Ascending aorta (tissue), 2 donors: ENCODE measurements at regions of chr18 and their contacts with region 1.

Region 1: DNA sequence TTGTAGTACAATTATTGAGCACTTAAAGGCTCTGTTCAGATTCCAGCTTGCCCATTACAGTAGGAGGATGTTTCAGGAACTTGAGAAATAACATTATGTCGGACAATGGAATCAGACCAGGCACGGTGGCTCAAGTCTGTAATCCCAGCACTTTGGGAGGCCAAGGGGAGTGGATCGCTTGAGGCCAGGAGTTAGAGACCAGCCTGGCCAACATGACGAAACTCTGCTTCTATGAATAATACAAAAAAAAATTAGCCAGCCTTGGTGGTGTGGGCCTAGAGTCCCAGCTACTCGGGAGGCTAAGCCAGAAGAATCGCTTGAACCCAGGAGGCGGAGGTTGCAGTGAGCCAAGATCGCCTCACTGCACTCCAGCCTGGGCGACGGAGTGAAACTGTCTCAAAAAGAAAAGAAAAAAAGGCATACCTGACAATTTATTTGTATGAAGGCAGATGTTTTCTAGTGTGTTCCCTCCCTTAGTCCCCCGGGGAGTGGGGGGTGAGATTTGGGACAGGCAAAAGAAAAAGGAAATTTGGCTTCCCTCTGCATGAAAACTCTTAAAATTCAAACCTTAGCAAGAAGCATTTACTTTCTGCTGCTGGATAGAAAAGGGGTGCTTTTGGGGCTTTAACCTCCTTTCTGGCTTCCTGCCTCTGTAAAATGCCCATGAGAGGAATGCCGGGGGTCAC is 13.8 kb upstream of the ZNF532 start:
- DNase-seq: no peak
- H3K4me3 ChIP-seq: no peak overlapping the region
- H3K27ac ChIP-seq: peak overlapping the region; percentile 62 to 68
- H3K4me1 ChIP-seq: peaks cover 0 to 12% of the 10 kb centered on the region in 2 donors
- H3K27me3 ChIP-seq: no peaks in the 10 kb centered on the region
- CTCF ChIP-seq: no peak

Region 2: GRCh38 chr18:58779529-58779928 is 71.4 kb before region 1 on chr18:
- intact Hi-C with region 1: no loop called
- DNase-seq: no peak
- H3K4me3 ChIP-seq: no peak overlapping the region
- H3K27ac ChIP-seq: no peak overlapping the region
- H3K4me1 ChIP-seq: peaks cover 3 to 9% of the 10 kb centered on the region in 2 donors
- H3K27me3 ChIP-seq: no peaks in the 10 kb centered on the region
- CTCF ChIP-seq: no peak

Region 3: DNA sequence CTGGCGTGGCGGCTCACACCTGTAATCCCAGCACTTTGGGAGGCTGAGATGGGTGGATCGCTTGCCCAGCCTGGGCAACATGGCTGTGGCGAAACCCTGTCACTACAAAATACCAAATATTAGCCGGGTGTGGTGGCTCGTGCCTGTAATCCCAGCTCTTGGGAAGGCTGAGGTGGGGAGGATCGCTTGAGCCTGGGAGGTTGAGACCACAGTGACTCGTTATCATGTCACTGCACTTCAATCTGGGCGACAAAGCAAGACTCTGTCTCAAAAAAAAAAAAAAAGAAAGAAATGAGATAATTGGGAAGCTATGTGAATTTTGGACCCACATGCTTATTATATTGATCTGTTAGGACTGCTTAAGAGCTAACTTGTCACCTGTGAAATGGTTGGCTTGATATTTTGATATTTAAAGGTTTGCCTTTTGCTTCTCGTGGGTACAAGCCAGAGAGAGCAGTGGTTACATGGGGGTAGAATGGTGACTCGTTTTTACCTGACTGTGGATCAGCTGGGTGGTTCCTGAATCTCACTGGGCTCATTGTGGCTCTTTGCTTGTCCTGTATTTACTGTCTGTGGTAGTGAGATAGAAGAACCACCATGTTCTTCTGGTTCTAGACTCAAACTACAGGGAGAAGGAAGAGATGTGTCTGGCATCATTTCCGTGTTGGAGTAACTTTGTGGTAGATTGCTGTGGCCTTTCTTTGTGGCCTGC is 42.6 kb after region 1 on chr18:
- intact Hi-C with region 1: loop called (anchors 5 kb)
- DNase-seq: no peak
- H3K4me3 ChIP-seq: no peak overlapping the region
- H3K27ac ChIP-seq: peak overlapping the region; percentile 79 to 86
- H3K4me1 ChIP-seq: peaks cover 0 to 47% of the 10 kb centered on the region in 2 donors
- H3K27me3 ChIP-seq: no peaks in the 10 kb centered on the region
- CTCF ChIP-seq: no peak

Region 4: GRCh38 chr18:59272971-59273935 is 422.3 kb after region 1 on chr18 and contains the start of gene RAX:
- intact Hi-C with region 1: no loop called
- DNase-seq: no peak
- H3K4me3 ChIP-seq: peak within 1 kb of the TSS; percentile 44 to 51
- H3K27ac ChIP-seq: no peak within 1 kb of the TSS
- H3K4me1 ChIP-seq: peaks cover 0 to 5% of the 10 kb centered on the region in 2 donors
- H3K27me3 ChIP-seq: peaks cover 17% of the 10 kb centered on the region
- CTCF ChIP-seq: no peak
- total RNA-seq, gene RAX: not detected